ENCODE measurements at regions of chr1 and their contacts with region 1.

Region 1: GRCh38 chr1:159780583-159781582 is at the start of gene DUSP23:
- DNase-seq: peak; percentile 99
- H3K4me3 ChIP-seq: peak within 1 kb of the TSS; percentile 65 to 80 (median 72)
- H3K27ac ChIP-seq: peak within 1 kb of the TSS; percentile 77 to 87 (median 82)
- H3K4me1 ChIP-seq: peaks cover 0 to 12% (median 6%) of the 10 kb centered on the region in 4 donors
- H3K27me3 ChIP-seq: no peaks in the 10 kb centered on the region
- CTCF ChIP-seq: peak; percentile 92 to 98 (median 94)
- EP300 ChIP-seq: peak in 2 of 4 donors; percentile 16 to 42
- POLR2A ChIP-seq: peak; percentile 57
- total RNA-seq, gene DUSP23: 40.4 to 59.1 (median 51.6) TPM

Region 2: DNA sequence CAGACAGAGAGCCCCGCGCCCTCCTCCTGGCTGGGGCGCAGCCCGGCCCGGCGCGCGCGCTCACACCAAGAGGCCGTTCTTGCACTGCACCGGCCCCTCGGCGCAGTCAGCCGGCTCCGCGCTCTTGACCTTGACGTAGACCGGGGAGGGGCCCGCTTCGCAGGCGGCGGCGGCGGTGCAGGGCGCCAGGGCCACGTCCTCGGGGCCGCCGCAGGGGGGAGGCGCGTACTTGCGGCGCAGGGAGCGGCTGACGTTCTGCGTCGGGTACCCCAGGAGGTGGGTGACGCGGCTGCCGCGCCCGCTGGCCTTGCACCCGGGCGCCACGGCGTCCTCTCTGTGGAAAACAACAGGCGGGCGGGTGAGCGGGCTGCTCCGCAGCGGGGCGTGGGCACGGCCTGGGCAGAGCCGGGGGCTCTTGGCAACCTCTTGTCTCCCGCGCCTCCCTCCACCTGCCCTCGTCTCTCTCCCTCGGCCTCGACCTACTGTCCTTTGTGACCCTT is 73.9 kb after region 1 on chr1:
- intact Hi-C with region 1: loop called (anchors 2 kb)
- DNase-seq: peak; percentile 93
- H3K4me3 ChIP-seq: peak overlapping the region; percentile 57 to 73 (median 68)
- H3K27ac ChIP-seq: peak overlapping the region; percentile 91 to 97 (median 96)
- H3K4me1 ChIP-seq: peaks cover 0 to 26% (median 21%) of the 10 kb centered on the region in 4 donors
- H3K27me3 ChIP-seq: no peaks in the 10 kb centered on the region
- CTCF ChIP-seq: peak in 1 of 4 experiments; percentile 9
- EP300 ChIP-seq: no peak
- POLR2A ChIP-seq: peak in 1 of 2 donors; percentile 57

Region 3: GRCh38 chr1:159924981-159925712 is 144.3 kb after region 1 on chr1 and contains the start of gene TAGLN2:
- intact Hi-C with region 1: loop called (anchors 10 kb)
- DNase-seq: peak; percentile 96
- H3K4me3 ChIP-seq: peak within 1 kb of the TSS; percentile 70 to 80 (median 76)
- H3K27ac ChIP-seq: peak within 1 kb of the TSS; percentile 86 to 98 (median 95)
- H3K4me1 ChIP-seq: peaks cover 0 to 43% (median 34%) of the 10 kb centered on the region in 4 donors
- H3K27me3 ChIP-seq: no peaks in the 10 kb centered on the region
- CTCF ChIP-seq: no peak
- EP300 ChIP-seq: peak in 1 of 4 donors; percentile 24
- POLR2A ChIP-seq: peak; percentile 82 to 94
- total RNA-seq, gene TAGLN2: 88.8 to 109 (median 99.0) TPM

Region 4: GRCh38 chr1:160006312-160006940 is 225.5 kb after region 1 on chr1:
- intact Hi-C with region 1: loop called (anchors 5 kb)
- DNase-seq: peak; percentile 76
- H3K4me3 ChIP-seq: no peak overlapping the region
- H3K27ac ChIP-seq: no peak overlapping the region
- H3K4me1 ChIP-seq: no peaks in the 10 kb centered on the region
- H3K27me3 ChIP-seq: no peaks in the 10 kb centered on the region
- CTCF ChIP-seq: peak; percentile 22 to 81 (median 76)
- EP300 ChIP-seq: no peak
- POLR2A ChIP-seq: no peak

Region 5: GRCh38 chr1:160267284-160267991 is 486.6 kb after region 1 on chr1:
- intact Hi-C with region 1: loop called (anchors 5 kb)
- DNase-seq: no peak
- H3K4me3 ChIP-seq: no peak overlapping the region
- H3K27ac ChIP-seq: no peak overlapping the region
- H3K4me1 ChIP-seq: peaks cover 0 to 6% (median 2%) of the 10 kb centered on the region in 4 donors
- H3K27me3 ChIP-seq: no peaks in the 10 kb centered on the region
- CTCF ChIP-seq: no peak
- EP300 ChIP-seq: no peak
- POLR2A ChIP-seq: no peak

Measured in sigmoid colon (tissue), 7 donors.